Tibial artery (tissue), 4 donors: ENCODE measurements at regions of chr16 and their contacts with region 1.

Region 1: DNA sequence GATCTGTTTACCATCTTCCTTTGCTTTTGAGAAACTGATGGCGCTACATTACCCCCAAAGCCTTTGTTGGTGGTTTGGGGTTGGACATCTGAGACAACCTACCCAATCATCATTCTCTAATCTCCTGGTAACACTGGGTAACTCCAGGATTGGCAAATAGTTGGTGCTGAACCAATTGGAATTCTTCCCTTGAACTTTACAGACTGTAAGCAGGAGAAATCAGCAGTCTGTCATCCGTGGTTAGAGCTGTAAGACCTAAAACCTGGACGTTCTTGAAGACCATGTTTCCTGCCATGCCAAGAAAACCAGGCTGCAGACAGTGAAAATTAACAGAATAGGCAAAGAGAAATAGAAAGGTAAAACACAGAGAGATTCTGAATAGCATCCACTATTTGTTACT is 398.8 kb upstream of the SALL1 start:
- DNase-seq: no peak
- H3K4me3 ChIP-seq: no peak overlapping the region
- H3K27ac ChIP-seq: no peak overlapping the region
- H3K4me1 ChIP-seq: no peaks in the 10 kb centered on the region
- H3K27me3 ChIP-seq: no peaks in the 10 kb centered on the region
- CTCF ChIP-seq: no peak

Region 2: DNA sequence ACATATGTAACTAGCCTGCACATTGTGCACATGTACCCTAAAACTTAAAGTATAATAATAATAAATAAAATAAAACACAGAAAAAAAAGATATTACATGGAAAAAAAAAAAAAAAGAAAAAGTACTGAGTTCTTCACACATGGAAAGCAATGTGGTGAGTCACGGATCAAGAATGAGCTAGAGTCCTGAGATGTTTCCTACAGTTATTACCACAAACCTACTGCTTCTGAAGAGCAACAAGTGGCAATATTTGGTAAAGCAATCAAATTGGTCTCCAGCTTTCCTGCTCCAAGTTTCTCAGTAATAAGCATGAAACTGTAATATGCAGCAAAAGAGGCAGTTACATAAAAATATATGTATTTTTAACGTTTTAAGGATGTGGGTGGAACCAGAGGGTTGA is 175.5 kb before region 1 on chr16:
- intact Hi-C with region 1: no loop called
- DNase-seq: no peak
- H3K4me3 ChIP-seq: no peak overlapping the region
- H3K27ac ChIP-seq: no peak overlapping the region
- H3K4me1 ChIP-seq: no peaks in the 10 kb centered on the region
- H3K27me3 ChIP-seq: no peaks in the 10 kb centered on the region
- CTCF ChIP-seq: no peak

Region 3: DNA sequence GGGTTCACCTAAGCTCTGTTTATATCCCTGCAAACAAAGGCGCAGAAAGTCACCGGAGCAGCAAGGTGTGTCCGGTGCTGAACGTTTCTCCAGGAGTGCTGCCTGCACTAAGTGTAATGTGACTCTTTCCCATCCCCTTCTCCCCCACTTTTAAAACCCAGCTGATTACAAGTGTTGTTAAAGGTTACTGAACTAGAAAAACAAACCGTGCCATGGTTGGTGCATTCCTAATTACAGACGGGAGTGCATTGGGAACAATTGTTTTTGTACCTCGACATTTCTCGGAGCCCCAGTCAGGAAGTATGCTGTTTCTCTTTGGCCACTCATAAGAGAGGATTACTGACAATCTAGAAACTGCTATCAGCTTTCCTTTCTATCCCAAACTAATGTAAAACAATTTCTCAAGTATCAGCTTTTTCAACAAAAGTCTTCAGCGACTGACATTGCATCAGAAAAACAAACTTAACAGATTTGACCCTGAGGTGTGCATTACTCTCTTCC is 42.2 kb after region 1 on chr16:
- intact Hi-C with region 1: loop called (anchors 5 kb)
- DNase-seq: no peak
- H3K4me3 ChIP-seq: no peak overlapping the region
- H3K27ac ChIP-seq: no peak overlapping the region
- H3K4me1 ChIP-seq: no peaks in the 10 kb centered on the region
- H3K27me3 ChIP-seq: no peaks in the 10 kb centered on the region
- CTCF ChIP-seq: no peak

Region 4: GRCh38 chr16:51994597-51994996 is 444.8 kb after region 1 on chr16:
- intact Hi-C with region 1: no loop called
- DNase-seq: no peak
- H3K4me3 ChIP-seq: no peak overlapping the region
- H3K27ac ChIP-seq: no peak overlapping the region
- H3K4me1 ChIP-seq: no peaks in the 10 kb centered on the region
- H3K27me3 ChIP-seq: no peaks in the 10 kb centered on the region
- CTCF ChIP-seq: no peak